Prostate gland (tissue), 2 donors: ENCODE measurements at regions of chr1 and their contacts with region 1.

Region 1: DNA sequence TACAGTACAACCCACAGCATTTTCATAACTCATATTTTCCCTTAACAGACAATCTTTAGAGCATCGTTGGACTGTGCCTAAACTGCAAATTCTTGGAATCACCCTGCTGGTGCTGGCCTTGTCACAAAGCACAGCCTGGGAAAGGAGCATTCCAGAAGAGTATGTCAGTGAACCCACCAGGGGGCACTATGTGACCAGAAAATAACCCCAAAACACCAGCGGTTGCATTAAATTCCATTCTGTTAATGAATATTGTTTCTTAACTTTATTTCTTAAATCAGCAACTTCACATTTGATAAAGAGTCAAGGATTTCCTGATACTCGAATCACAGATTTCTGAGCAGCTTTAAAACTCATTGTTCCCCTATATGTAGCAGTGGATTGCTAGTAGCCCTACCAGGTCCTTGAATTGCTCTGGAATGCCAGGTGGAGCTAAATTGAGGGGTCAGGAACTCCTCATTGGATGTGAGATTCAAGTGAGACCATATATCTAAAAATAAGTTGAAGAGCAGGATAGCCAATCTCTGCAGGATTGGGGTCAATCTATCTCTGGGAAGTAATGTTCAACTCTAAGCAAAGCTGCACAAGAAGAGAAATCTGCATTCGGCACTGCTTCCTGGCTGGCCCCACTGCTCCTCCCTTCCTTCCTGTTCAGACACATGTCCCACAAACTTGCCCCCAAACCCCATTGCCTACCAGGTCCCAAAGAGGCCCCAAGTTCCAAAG is 12.7 kb upstream of the RAB4A start:
- DNase-seq: peak; percentile 61
- H3K4me3 ChIP-seq: no peak overlapping the region
- H3K27ac ChIP-seq: no peak overlapping the region
- H3K4me1 ChIP-seq: no peaks in the 10 kb centered on the region
- H3K27me3 ChIP-seq: no peaks in the 10 kb centered on the region
- CTCF ChIP-seq: peak; percentile 67 to 91 (median 88)
- POLR2A ChIP-seq: no peak

Region 2: GRCh38 chr1:228664399-228664914 is 593.7 kb before region 1 on chr1:
- intact Hi-C with region 1: loop called (anchors 1 kb)
- DNase-seq: peak; percentile 76
- H3K4me3 ChIP-seq: no peak overlapping the region
- H3K27ac ChIP-seq: no peak overlapping the region
- H3K4me1 ChIP-seq: no peaks in the 10 kb centered on the region
- H3K27me3 ChIP-seq: no peaks in the 10 kb centered on the region
- CTCF ChIP-seq: peak; percentile 69 to 90 (median 82)
- POLR2A ChIP-seq: no peak

Region 3: DNA sequence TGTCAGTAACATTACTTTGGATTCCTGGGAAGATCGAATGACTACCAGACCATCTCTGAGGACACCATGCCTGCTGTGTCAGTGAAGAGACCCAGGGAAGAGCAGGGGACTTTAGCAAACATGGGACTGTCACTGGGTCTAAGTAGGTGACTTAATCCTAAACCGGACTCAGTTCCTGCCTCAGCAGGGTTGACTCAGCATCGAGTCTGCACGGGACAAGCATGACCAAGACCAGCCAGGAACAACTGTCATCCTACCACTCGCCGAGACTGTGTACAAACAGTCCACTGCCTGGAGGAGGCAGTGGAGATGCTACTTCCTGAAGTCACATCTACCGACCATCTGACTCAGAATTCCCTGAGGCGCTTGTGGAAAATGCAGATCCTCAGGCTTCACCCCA is 40.5 kb before region 1 on chr1:
- intact Hi-C with region 1: no loop called
- DNase-seq: no peak
- H3K4me3 ChIP-seq: no peak overlapping the region
- H3K27ac ChIP-seq: peak overlapping the region in 1 of 2 donors; percentile 51
- H3K4me1 ChIP-seq: peaks cover 6% of the 10 kb centered on the region
- H3K27me3 ChIP-seq: no peaks in the 10 kb centered on the region
- CTCF ChIP-seq: no peak
- POLR2A ChIP-seq: no peak

Region 4: GRCh38 chr1:229430761-229431283 is 172.6 kb after region 1 on chr1:
- intact Hi-C with region 1: no loop called
- DNase-seq: no peak
- H3K4me3 ChIP-seq: no peak overlapping the region
- H3K27ac ChIP-seq: no peak overlapping the region
- H3K4me1 ChIP-seq: peaks cover 12% of the 10 kb centered on the region
- H3K27me3 ChIP-seq: peaks cover 41% of the 10 kb centered on the region
- CTCF ChIP-seq: no peak
- POLR2A ChIP-seq: no peak

Region 5: GRCh38 chr1:229479660-229480399 is 221.6 kb after region 1 on chr1:
- intact Hi-C with region 1: loop called (anchors 2 kb)
- DNase-seq: no peak
- H3K4me3 ChIP-seq: no peak overlapping the region
- H3K27ac ChIP-seq: no peak overlapping the region
- H3K4me1 ChIP-seq: no peaks in the 10 kb centered on the region
- H3K27me3 ChIP-seq: no peaks in the 10 kb centered on the region
- CTCF ChIP-seq: no peak
- POLR2A ChIP-seq: no peak